Cardiac septum (tissue), 1 donor: ENCODE measurements at regions of chr3 and their contacts with region 1.

Region 1: GRCh38 chr3:33377926-33378325 is 62.3 kb downstream of the UBP1 start:
- DNase-seq: no peak

Region 2: DNA sequence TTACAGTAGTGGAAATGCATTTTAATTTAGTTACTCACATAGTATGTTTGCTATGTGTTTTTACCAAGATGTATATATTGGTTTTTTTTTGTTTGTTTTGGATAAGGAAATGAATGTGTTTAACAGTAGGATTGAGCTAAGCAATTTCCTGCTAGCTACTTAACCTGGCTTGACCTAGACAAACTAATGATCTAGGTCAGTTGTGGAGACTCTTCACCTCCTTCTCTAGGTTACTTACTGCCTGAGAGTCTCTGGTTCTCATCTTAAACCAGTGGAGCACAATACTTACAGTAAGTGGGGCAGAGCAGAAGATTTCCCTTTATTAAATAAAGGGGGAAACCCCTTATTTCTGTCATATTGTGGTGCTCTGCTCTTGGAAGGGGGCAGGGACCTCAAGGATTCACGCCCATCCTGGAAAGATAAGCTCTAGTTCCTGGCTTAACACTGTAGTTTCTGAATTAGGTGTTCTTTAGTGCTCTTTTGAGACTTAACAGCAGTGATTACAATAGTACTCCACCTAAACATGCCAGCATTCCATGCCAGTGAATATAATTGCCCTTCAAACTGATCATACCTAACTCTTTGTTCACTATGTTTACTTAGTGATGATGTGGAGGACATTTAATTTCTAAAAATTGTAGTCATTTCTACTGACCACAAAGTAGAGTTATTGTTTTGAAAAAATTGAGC is 17.6 kb before region 1 on chr3:
- intact Hi-C with region 1: no loop called
- DNase-seq: no peak

Region 3: DNA sequence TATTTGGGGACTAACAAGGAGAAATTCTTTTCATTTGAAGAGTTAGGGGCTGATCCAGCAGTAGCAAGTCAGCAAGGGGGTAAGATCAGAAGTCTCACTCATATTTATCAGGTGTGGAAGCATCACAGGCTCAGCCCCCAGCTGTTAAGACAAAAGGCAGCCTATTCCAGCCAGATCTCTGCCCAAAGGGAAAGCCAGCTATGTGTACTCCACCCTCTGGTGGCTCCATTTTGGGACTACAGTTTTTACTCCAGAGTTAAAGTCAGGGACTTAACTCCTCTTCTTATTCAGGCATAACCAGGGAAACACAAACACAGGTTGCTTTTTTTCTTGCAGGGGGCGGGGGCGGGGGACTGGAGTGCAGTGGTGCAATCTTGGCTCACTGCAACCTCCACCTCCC is 43.0 kb after region 1 on chr3:
- intact Hi-C with region 1: loop called (anchors 2 kb)
- DNase-seq: no peak

Region 4: DNA sequence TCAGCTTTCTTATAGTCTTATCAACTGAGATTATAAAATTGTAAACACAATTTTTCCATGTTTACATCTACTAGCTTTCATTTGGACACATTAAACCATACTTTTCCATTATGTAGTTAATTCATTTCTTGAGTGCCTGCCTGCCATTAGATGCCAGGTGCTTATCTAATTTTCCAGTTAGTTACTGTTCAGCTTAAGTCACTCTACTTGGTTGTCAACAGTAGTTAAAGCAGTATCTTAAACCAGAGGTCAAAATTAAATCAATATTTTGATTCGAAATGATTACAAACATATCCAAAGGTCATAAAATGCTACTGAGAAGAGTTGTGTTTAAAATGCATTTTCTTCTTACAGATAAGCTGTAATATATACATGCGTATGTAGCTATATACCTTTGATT is 118.5 kb after region 1 on chr3:
- intact Hi-C with region 1: no loop called
- DNase-seq: no peak